Common myeloid progenitor, CD34-positive (primary cell): ENCODE measurements at regions of chr2 and their contacts with region 1.

Region 1: GRCh38 chr2:231482806-231483391 is 18.6 kb upstream of the NCL start:
- DNase-seq: peak; percentile 68 to 76 (median 73)
- H3K4me3 ChIP-seq: peak overlapping the region in 6 of 7 experiments; percentile 3 to 79 (median 47)
- H3K27ac ChIP-seq: peak overlapping the region; percentile 33 to 54
- H3K4me1 ChIP-seq: peaks cover 0 to 19% (median 9%) of the 10 kb centered on the region in 4 experiments
- H3K27me3 ChIP-seq: no peaks in the 10 kb centered on the region

Region 2: DNA sequence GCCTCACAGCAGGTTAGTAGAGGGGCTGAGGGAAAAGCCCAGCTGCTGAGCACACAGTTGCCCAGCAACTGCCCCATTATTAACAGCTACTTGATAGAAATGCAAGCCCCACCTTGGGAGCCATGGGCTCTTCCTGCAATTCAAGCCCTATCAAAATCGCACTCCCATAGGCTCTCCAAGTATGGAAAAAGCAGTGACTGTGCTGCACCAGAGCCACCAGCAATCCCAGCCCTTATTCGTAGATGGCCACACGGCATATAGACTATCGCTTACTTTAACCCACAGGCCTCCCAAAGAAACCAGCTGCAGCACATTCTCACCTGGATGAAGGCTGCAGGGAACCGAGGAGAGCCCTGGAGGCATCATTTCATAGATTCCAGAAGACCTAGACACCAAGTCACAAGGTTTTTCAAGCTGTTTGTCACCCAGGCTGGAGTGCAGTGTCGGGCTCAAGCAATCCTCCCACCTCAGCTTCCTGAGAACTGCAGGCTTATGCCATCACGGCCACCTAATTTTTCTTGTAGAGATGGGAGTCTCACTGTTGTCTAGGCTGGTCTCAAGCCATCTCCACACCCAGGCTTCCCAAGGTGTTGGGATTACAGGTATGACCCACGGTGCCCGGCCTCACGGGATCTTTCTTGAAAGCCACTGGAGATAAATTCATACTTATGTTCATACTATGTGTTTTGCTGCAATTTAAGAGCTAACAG is 29.9 kb before region 1 on chr2:
- CTCF ChIA-PET with region 1: interaction called, 11 read pairs
- POLR2A ChIA-PET with region 1: no interaction called
- DNase-seq: peak in 2 of 3 donors; percentile 20 to 24
- H3K4me3 ChIP-seq: no peak overlapping the region
- H3K27ac ChIP-seq: no peak overlapping the region
- H3K4me1 ChIP-seq: peaks cover 0 to 2% (median 0%) of the 10 kb centered on the region in 4 experiments
- H3K27me3 ChIP-seq: no peaks in the 10 kb centered on the region

Region 3: DNA sequence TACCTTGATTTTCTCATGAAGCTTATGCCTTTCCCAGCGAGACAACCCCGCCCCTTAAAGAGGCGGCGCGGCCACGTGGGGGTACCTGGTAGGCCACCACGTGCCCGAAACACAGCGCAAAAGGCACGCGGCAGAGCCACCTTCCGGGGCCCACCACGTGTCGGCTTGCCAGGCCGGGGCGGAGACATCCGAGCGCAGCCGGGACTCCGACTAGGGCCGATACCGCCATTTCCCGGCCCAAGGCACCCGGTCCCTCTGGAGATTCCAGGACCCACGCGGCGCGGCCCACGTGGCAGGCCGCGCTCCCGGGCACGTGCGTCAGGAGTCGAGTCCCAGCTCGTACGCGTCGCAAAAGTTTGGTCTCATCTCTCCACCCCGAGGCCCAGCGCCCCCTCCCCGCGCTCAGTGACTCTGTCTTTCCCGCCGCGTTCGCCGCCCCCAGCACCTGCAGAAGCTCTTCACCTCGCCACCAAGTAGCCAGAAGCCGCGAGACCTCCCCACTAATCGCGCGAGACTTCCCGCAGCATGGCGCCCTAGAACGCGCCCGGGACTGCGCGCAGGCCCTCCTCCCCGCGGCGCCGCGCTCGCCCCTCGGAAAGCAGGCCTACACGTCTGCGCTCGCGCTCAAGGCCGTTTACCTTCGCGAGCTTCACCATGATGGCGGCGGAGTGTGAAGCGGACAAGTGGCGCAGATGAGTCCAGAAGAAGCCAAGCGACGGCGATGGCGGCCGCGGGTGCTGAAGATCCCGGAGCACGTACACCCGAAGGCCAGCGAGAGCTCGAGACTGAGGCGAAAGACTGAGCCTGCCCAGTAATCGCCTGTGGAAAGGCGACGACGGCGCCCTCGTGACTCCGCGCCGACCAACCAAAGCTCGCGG is 19.0 kb before region 1 on chr2 and contains the start of gene NCL:
- CTCF ChIA-PET with region 1: interaction called, 71 read pairs
- POLR2A ChIA-PET with region 1: interaction called, 11 read pairs
- DNase-seq: peak; percentile 98 to 99 (median 99)
- H3K4me3 ChIP-seq: peak within 1 kb of the TSS; percentile 74 to 93 (median 82)
- H3K27ac ChIP-seq: peak within 1 kb of the TSS; percentile 95 to 98
- H3K4me1 ChIP-seq: peaks cover 11 to 42% (median 33%) of the 10 kb centered on the region in 4 experiments
- H3K27me3 ChIP-seq: no peaks in the 10 kb centered on the region

Region 4: GRCh38 chr2:231503766-231504165 is 20.9 kb after region 1 on chr2:
- CTCF ChIA-PET with region 1: interaction called, 10 read pairs
- POLR2A ChIA-PET with region 1: interaction called, 3 read pairs
- DNase-seq: no peak
- H3K4me3 ChIP-seq: no peak overlapping the region
- H3K27ac ChIP-seq: no peak overlapping the region
- H3K4me1 ChIP-seq: peaks cover 0 to 4% (median 0%) of the 10 kb centered on the region in 4 experiments
- H3K27me3 ChIP-seq: no peaks in the 10 kb centered on the region

Region 5: DNA sequence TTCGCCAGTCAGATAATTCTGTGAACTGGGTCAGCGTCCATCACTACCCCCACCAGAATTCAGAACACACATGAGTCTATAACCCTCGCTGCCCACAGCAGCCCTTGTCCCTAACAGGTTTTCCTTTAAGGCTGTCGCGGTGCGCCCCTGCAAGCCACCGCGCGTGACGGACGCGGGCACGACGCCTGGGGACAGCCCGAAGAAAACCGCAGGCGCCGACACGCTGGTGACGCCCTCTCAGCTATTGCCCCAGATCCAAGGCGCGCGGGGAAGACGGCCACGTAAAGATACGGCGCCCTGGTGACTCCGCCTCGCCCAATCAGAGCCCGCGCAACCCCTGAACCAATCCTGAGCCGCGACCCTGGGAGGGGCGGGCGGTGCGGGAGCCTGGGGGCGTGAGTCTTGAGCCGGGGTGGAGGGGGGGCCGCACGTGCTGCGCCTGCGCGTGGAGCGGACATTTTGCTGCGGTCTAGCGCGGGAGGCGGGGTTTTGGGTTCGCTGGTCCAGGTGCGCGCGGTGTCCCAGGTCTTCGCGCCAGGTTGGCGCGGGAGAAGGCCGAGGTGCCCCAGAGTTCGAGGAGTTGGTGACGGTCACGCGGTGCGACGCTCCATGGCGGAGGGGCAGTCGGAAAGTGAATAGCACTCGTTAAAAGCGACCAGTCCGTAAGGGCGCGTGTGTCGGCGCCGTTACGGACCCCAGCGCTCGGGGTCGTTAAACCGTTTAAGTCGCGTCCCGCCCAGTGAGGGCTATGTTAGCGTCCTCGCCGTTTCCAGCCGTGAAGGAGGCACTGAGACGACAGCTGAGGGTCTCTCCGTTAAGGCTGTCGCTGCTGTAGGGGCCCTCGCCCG is 31.4 kb after region 1 on chr2:
- CTCF ChIA-PET with region 1: interaction called, 11 read pairs
- POLR2A ChIA-PET with region 1: interaction called, 5 read pairs
- DNase-seq: peak; percentile 98 to 99 (median 99)
- H3K4me3 ChIP-seq: peak overlapping the region; percentile 50 to 83 (median 76)
- H3K27ac ChIP-seq: peak overlapping the region; percentile 79 to 87
- H3K4me1 ChIP-seq: peaks cover 2 to 21% (median 10%) of the 10 kb centered on the region in 4 experiments
- H3K27me3 ChIP-seq: no peaks in the 10 kb centered on the region

Region 6: DNA sequence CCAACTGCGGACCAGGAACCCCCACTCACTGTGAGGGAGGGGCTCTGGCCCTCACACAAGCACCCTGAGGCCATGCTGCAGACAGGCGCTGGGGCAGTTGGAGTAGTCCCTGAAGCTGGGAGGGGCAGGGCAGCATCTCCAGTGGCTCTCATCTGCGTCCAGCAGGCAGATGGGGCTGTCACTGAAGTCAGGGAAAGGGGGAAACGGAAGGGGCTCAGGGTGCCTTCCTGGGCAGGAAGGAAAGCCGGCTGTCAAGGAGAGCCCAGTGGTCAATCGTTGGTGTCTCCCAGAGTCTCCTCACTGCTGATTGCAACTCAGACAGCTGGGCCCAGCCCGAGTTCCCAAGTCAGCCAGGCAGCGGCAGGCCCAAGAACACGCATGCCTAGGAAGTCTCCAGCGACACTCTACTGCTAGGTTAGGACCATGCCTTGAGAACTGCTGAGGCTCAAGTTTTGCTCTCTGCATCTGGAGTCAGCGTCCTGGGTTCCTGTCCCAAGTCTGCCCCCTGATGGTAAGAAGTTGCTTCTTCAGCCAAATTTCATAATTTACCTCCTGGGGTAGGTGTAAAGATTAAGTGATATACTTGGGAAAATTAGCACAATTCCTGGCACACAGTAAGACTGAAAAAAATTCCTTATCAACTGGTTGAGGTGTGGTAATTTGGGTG is 74.8 kb after region 1 on chr2:
- CTCF ChIA-PET with region 1: interaction called, 31 read pairs
- POLR2A ChIA-PET with region 1: interaction called, 3 read pairs
- DNase-seq: peak; percentile 90 to 94 (median 92)
- H3K4me3 ChIP-seq: no peak overlapping the region
- H3K27ac ChIP-seq: no peak overlapping the region
- H3K4me1 ChIP-seq: peaks cover 7 to 37% (median 25%) of the 10 kb centered on the region in 4 experiments
- H3K27me3 ChIP-seq: no peaks in the 10 kb centered on the region

Region 7: GRCh38 chr2:231563378-231563961 is 80.6 kb after region 1 on chr2:
- CTCF ChIA-PET with region 1: interaction called, 20 read pairs
- POLR2A ChIA-PET with region 1: no interaction called
- DNase-seq: peak; percentile 73 to 83 (median 79)
- H3K4me3 ChIP-seq: no peak overlapping the region
- H3K27ac ChIP-seq: no peak overlapping the region
- H3K4me1 ChIP-seq: peaks cover 0 to 6% (median 4%) of the 10 kb centered on the region in 4 experiments
- H3K27me3 ChIP-seq: no peaks in the 10 kb centered on the region